GM12878 (cell line): ENCODE measurements at regions of chr1 and their contacts with region 1.

Region 1: GRCh38 chr1:40951943-40952743 is 27.4 kb upstream of the CTPS1 start:
- DNase-seq: no peak
- ATAC-seq: peak; percentile 88
- H3K4me3 ChIP-seq: no peak overlapping the region
- H3K27ac ChIP-seq: no peak overlapping the region
- H3K4me1 ChIP-seq: no peaks in the 10 kb centered on the region
- H3K27me3 ChIP-seq: no peaks in the 10 kb centered on the region
- CTCF ChIP-seq: peak; percentile 91 to 94 (median 92)
- EP300 ChIP-seq: no peak
- POLR2A ChIP-seq: no peak
- RAD21 ChIP-seq: peak; percentile 87

Region 2: GRCh38 chr1:40612345-40612831 is 339.8 kb before region 1 on chr1:
- CTCF ChIA-PET with region 1: interaction called, 28 read pairs
- POLR2A ChIA-PET with region 1: no interaction called
- RAD21 ChIA-PET with region 1: interaction called, 4 read pairs
- SMC1A ChIA-PET with region 1: interaction called, 5 read pairs
- in situ Hi-C with region 1: loop called (anchors 10 kb)
- intact Hi-C with region 1: loop called (anchors 5 kb)
- DNase-seq: peak; percentile 46
- ATAC-seq: peak; percentile 100
- H3K4me3 ChIP-seq: no peak overlapping the region
- H3K27ac ChIP-seq: no peak overlapping the region
- H3K4me1 ChIP-seq: 0 out of 2 replicates have a peak, but pooled peaks cover 3% of the 10 kb centered on the region
- H3K27me3 ChIP-seq: no peaks in the 10 kb centered on the region
- CTCF ChIP-seq: peak; percentile 91 to 97 (median 93)
- EP300 ChIP-seq: no peak
- POLR2A ChIP-seq: no peak
- RAD21 ChIP-seq: peak; percentile 96

Region 3: DNA sequence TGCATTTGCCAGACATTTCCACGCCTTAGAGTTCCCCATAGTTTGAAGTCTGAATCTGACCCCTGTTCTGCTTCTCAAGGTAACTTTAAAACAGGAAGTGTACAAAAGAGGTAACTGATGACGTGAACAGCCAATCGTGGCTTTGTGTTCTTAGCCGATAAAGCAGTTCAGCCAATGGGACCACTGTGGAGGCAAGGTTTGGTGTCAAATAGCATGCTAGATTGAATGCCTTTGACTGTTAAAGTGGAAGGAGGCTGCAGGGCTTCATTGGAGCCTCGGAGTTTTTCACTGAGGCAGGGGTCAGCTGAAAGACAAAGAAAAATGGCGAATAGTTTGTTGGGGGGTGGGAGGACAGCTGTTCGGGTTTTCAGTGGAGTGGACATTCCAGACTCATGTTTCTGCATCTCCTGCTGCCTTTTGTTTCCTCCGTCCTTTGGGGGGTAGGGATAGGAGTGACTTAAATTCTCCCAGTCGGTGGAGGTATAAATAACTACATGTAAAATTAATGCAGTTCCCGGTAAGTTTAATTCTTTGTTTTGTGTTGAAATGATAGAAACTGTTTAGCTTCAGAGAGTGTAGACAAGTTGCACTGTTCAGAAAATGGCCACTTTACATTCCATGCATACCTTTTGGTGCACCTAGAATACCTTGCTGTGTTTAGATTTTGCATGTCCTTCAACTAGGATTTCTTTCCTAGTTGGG is 242.9 kb before region 1 on chr1:
- CTCF ChIA-PET with region 1: no interaction called
- POLR2A ChIA-PET with region 1: no interaction called
- RAD21 ChIA-PET with region 1: no interaction called
- SMC1A ChIA-PET with region 1: no interaction called
- in situ Hi-C with region 1: no loop called
- intact Hi-C with region 1: no loop called
- DNase-seq: peak; percentile 96
- ATAC-seq: peak; percentile 96
- H3K4me3 ChIP-seq: peak overlapping the region; percentile 77
- H3K27ac ChIP-seq: peak overlapping the region; percentile 82
- H3K4me1 ChIP-seq: peaks cover 22% of the 10 kb centered on the region
- H3K27me3 ChIP-seq: no peaks in the 10 kb centered on the region
- CTCF ChIP-seq: no peak
- EP300 ChIP-seq: no peak
- POLR2A ChIP-seq: peak; percentile 68
- RAD21 ChIP-seq: no peak

Region 4: GRCh38 chr1:40849801-40850592 is 102.1 kb before region 1 on chr1:
- CTCF ChIA-PET with region 1: interaction called, 109 read pairs
- POLR2A ChIA-PET with region 1: no interaction called
- RAD21 ChIA-PET with region 1: interaction called, 41 read pairs
- SMC1A ChIA-PET with region 1: interaction called, 197 read pairs
- in situ Hi-C with region 1: loop called (anchors 5 kb)
- intact Hi-C with region 1: loop called (anchors 2 kb)
- DNase-seq: peak; percentile 62
- ATAC-seq: peak; percentile 92
- H3K4me3 ChIP-seq: no peak overlapping the region
- H3K27ac ChIP-seq: no peak overlapping the region
- H3K4me1 ChIP-seq: peaks cover 12% of the 10 kb centered on the region
- H3K27me3 ChIP-seq: no peaks in the 10 kb centered on the region; a peak in 1 of 4 replicates
- CTCF ChIP-seq: peak; percentile 82 to 94 (median 86)
- EP300 ChIP-seq: no peak
- POLR2A ChIP-seq: no peak
- RAD21 ChIP-seq: peak; percentile 91

Region 5: GRCh38 chr1:40862008-40862863 is 89.9 kb before region 1 on chr1 and contains the start of gene CITED4:
- CTCF ChIA-PET with region 1: interaction called, 33 read pairs
- POLR2A ChIA-PET with region 1: no interaction called
- RAD21 ChIA-PET with region 1: interaction called, 30 read pairs
- SMC1A ChIA-PET with region 1: interaction called, 197 read pairs
- in situ Hi-C with region 1: no loop called
- intact Hi-C with region 1: no loop called
- DNase-seq: peak; percentile 55
- ATAC-seq: peak; percentile 98
- H3K4me3 ChIP-seq: peak within 1 kb of the TSS; percentile 68
- H3K27ac ChIP-seq: no peak within 1 kb of the TSS
- H3K4me1 ChIP-seq: peaks cover 7% of the 10 kb centered on the region; the same call in 1 of the 2 replicates
- H3K27me3 ChIP-seq: peaks cover 12 to 13% of the 10 kb centered on the region in 2 experiments; a peak in 3 of 4 replicates
- CTCF ChIP-seq: peak in 2 of 3 experiments; percentile 11 to 34; a peak in 3 of 6 replicates
- EP300 ChIP-seq: no peak
- POLR2A ChIP-seq: peak; percentile 63; the same call in 1 of the 2 replicates
- RAD21 ChIP-seq: peak; percentile 43; the same call in 1 of the 2 replicates
- polyA plus RNA-seq, gene CITED4: not detected

Region 6: DNA sequence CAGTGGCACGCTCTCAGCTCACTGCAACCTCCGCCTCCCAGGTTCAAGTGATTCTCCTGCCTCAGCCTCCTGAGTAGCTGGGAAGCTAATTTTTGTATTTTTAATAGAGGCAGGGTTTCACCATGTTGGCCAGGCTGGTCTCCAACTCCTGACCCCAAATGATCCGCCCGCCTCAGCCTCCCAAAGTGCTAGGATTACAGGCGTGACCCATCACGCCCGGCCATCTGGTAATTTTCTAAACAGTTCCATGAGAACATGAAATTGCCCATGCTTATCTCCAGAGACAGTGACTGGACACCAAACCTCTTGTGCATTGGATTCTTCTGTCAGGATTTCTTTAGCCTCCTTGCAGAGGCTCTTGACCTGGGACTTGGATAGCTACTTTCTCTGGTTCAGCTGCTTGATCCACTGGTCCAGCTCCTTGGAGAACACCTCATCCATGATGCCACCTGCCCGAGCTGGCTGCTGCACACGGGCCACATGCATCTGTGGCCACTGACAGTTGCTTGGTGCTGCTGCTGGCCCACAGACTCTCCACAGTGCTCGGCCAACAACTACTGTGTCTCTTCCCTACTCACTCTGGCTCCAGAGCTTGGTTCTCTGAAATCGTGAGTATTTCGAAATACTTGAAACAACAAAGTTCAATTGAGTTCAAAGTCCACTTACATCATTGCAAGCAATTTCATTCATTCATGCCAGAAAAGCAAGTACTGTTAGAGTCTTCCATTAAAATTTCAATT is 12.7 kb before region 1 on chr1:
- CTCF ChIA-PET with region 1: interaction called, 78 read pairs
- POLR2A ChIA-PET with region 1: no interaction called
- RAD21 ChIA-PET with region 1: interaction called, 5 read pairs
- SMC1A ChIA-PET with region 1: interaction called, 10 read pairs
- in situ Hi-C with region 1: no loop called
- intact Hi-C with region 1: no loop called
- DNase-seq: no peak
- ATAC-seq: no peak
- H3K4me3 ChIP-seq: no peak overlapping the region
- H3K27ac ChIP-seq: no peak overlapping the region
- H3K4me1 ChIP-seq: no peaks in the 10 kb centered on the region
- H3K27me3 ChIP-seq: no peaks in the 10 kb centered on the region
- CTCF ChIP-seq: no peak
- EP300 ChIP-seq: no peak
- POLR2A ChIP-seq: no peak
- RAD21 ChIP-seq: no peak